Transverse colon (tissue), 4 donors: ENCODE measurements at regions of chr12 and their contacts with region 1.

Region 1: DNA sequence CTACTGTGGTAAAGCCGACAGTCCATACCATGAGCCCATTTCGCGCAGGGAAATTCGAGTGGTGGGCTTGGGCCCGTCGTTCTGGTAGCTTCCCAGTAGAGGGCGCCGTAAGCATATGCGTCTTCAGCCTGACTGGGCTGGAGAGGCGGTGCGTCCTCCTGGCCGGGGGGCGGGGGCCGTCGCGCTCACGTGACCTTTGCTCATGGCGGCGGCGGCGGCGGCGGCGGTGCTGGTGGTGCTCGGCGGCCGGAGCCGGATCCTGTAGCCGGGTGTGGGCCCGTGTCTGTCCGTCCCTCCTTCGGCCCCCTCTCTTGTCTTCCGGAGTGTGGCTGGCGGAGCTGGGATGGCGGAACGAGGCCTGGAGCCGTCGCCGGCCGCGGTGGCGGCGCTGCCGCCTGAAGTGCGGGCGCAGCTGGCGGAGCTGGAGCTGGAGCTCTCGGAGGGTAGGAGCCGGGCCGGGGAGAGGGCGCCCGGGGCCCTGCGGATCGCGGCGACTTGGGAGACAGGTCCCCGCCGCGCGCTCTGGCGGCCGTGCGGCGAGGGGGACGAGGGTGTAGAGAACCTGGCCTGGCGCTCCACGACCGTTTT is at the start of gene DIP2B:
- DNase-seq: peak; percentile 96
- H3K4me3 ChIP-seq: peak within 1 kb of the TSS; percentile 68 to 80 (median 76)
- H3K27ac ChIP-seq: peak within 1 kb of the TSS; percentile 92 to 99 (median 93)
- H3K4me1 ChIP-seq: peaks cover 26 to 48% (median 38%) of the 10 kb centered on the region in 4 donors
- H3K27me3 ChIP-seq: no peaks in the 10 kb centered on the region
- CTCF ChIP-seq: peak; percentile 78 to 99 (median 94)
- EP300 ChIP-seq: no peak
- POLR2A ChIP-seq: peak; percentile 72
- total RNA-seq, gene DIP2B: 40.0 to 129 (median 57.9) TPM

Region 2: DNA sequence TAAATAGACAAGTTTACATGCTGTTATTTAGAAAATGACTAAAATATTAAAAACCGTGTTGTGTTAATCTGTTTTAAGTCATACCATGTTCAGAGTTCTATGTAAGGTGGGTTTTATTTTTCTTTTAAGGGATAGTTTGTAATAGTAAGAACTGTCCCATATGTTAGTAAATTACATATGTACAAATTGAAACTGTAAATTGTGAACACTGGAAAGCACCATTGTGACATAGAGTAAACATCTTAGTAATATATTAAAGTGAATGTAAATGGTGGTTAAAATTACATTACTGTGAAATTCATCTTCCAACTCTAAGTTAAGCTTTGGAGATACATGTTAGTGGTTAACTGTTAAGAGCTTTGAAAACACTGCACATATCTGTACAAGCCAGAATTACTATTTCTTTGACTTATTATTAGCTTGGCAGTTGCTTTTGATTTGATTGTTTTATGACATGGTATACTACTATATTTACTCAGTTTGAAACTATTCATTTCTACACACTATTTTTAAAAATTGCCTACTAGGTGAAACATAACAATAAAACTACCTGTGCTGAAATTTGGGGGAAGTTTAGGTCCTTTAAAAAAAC is 27.6 kb before region 1 on chr12:
- in situ Hi-C with region 1: no loop called
- intact Hi-C with region 1: no loop called
- DNase-seq: no peak
- H3K4me3 ChIP-seq: no peak overlapping the region
- H3K27ac ChIP-seq: no peak overlapping the region
- H3K4me1 ChIP-seq: no peaks in the 10 kb centered on the region
- H3K27me3 ChIP-seq: no peaks in the 10 kb centered on the region
- CTCF ChIP-seq: no peak
- EP300 ChIP-seq: no peak
- POLR2A ChIP-seq: no peak

Region 3: DNA sequence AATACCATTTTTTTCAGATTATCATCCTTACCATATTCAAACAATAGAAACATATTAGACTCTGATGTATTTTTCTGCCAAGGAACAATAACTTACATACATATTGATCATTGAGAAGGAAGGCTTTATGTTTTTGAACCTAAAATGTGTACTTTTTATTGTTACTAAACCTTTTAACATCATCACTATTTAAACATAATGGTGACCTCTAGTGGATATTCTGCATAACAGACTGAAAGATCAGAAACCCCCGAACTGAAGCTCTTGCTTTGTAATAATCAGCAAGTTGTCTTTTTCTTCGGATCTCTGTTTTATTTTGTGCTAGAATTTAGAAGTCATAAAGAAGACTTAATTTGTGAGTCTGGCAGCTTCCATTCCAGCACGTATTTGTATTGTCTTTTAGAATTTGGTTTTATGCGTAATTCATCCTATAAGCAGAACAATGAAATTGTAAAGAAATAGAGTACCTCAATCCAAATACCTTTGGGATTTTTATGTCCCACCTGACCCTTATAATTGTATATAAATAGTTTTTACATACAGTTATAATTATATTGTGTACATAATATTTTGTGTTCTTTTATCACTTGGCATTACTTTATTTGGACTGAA is 133.1 kb after region 1 on chr12:
- in situ Hi-C with region 1: loop called (anchors 5 to 10 kb)
- intact Hi-C with region 1: loop called (anchors 5 kb)
- DNase-seq: no peak
- H3K4me3 ChIP-seq: no peak overlapping the region
- H3K27ac ChIP-seq: no peak overlapping the region
- H3K4me1 ChIP-seq: peaks cover 0 to 36% (median 21%) of the 10 kb centered on the region in 4 donors
- H3K27me3 ChIP-seq: no peaks in the 10 kb centered on the region
- CTCF ChIP-seq: peak; percentile 61 to 73 (median 65)
- EP300 ChIP-seq: no peak
- POLR2A ChIP-seq: no peak

Region 4: DNA sequence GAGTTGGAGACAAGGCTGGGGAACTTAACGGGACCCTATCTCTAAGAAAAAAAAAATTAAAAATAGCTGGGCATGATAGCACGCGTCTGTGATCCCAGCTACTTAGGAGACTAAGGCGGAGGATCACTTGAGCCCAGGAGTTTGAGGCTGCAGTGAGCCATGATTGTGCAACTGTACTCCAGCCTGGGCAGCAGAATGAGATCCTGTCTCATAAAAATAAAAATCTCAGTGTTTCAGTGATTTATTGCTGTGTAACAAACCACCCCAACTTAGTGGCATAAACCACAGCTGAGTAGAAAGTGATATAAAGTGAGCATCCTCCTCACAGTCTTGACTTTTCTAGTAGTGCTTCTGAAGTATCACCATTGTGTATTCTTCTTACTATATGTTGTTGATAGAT is 248.4 kb after region 1 on chr12:
- in situ Hi-C with region 1: no loop called
- intact Hi-C with region 1: no loop called
- DNase-seq: no peak
- H3K4me3 ChIP-seq: no peak overlapping the region
- H3K27ac ChIP-seq: no peak overlapping the region
- H3K4me1 ChIP-seq: no peaks in the 10 kb centered on the region
- H3K27me3 ChIP-seq: no peaks in the 10 kb centered on the region
- CTCF ChIP-seq: no peak
- EP300 ChIP-seq: no peak
- POLR2A ChIP-seq: no peak